Posterior cingulate gyrus (tissue), 11 donors: ENCODE measurements at regions of chr18 and their contacts with region 1.

Region 1: DNA sequence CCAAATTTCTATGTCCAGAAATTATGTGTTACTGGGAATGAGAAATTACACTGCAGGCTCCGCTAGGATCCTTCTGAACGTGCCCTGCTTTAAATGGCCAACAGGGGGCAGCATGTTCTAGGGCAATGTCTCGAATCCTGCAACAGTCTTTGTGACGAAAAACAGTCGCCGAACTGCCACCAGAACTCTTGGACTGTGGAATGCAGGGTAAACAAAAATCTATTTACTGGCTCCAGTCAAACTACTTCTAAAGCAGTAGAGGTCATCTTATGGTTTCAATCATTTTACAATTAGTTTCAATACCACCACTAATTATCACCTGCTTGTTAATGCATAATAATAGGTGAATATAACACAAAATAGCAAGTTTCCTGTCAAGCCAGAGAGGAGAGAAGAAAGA is 9.8 kb upstream of the ZNF397 start:
- DNase-seq: peak; percentile 56 to 96 (median 83)

Region 2: DNA sequence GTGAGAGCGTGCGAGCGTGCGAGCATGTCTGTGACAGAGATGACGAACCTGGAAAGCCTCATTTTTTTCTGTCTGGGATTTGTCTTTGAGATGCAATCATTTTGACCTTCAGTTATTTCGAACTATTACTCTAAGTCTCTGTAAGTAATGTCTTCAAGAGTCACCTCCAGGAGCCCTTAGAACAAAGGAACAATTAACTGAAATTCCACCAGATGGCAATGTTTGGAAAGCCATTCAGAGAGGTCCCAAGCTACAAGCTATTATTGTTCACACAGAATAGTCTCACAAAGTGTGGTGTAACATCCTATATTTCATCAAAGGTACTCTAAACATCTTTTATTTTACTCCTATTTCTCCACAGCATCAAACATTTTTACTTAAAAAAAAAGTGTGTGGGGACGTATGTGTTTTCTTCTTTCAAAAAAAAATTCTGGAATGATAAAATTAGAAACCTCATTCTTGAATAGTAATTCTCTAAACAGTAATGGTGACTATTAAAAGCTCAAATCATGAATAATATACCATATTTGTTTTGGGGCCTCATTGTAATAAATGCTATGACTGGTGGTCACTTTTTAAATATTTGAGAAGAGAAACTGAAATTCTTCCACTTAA is 225.0 kb before region 1 on chr18:
- intact Hi-C with region 1: loop called (anchors 10 kb)
- DNase-seq: no peak

Region 3: GRCh38 chr18:35355140-35355618 is 124.1 kb after region 1 on chr18:
- intact Hi-C with region 1: loop called (anchors 1 kb)
- DNase-seq: peak; percentile 56 to 97 (median 79)